ENCODE measurements at regions of chr2 and their contacts with region 1.

Region 1: GRCh38 chr2:191321861-191322686 is 76.9 kb downstream of the MYO1B start:
- DNase-seq: peak; percentile 83
- H3K4me3 ChIP-seq: no peak overlapping the region
- CTCF ChIP-seq: no peak

Region 2: DNA sequence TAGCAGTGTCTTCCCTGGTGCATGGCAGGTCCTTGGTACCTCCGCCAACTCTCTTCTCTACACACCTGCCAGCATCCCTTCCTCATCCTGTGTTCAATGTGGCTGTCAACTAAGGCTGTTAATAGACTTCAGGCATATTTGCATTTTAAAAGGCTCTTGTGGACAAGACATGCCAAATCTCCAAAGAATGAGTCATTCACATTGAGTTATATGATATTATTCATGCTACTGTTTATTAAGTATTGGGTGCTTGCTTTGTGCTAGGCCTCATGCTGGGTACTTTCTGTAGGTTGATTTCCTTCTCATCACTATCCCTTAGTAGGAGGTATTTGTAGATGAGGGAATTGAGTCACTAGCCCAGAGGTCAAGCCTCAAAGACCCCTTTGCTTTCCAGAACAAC is 71.7 kb before region 1 on chr2:
- in situ Hi-C with region 1: loop called (anchors 5 kb)
- DNase-seq: no peak
- H3K4me3 ChIP-seq: no peak overlapping the region
- CTCF ChIP-seq: no peak

Region 3: DNA sequence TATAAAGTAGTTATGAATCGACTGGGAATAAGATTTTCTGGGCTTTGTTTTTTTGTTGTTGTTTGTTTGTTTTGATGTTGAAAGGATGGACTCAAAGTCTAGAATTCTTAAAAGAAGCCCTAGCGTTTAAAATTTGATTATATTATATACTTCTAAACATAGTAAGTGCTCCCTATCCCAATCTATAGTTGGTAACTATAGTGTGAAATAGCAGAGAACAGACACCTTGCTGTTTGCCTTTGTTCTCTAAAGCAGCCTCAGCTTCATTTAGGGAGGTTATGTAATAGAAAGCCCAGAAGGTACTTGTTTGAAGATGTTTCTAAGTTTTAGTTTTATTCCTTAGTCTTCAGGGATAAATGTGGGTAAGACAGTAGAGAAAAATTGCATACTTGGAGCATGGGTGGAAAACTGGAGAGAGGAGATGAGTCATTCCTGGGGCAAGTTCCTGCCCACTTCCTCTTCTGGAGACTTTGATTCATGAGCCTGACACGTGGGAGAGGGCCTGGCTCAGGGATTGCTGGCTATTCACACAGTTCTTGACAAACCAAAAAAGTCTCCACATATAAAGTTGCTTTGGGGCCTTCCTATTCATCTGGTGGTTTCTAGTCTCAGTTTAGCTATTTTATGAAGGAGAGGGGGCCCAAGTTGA is 55.0 kb after region 1 on chr2:
- in situ Hi-C with region 1: no loop called
- DNase-seq: peak; percentile 88
- H3K4me3 ChIP-seq: no peak overlapping the region
- CTCF ChIP-seq: no peak

Measured in astrocyte of the cerebellum (primary cell).